ENCODE measurements at regions of chr10 and their contacts with region 1.

Region 1: DNA sequence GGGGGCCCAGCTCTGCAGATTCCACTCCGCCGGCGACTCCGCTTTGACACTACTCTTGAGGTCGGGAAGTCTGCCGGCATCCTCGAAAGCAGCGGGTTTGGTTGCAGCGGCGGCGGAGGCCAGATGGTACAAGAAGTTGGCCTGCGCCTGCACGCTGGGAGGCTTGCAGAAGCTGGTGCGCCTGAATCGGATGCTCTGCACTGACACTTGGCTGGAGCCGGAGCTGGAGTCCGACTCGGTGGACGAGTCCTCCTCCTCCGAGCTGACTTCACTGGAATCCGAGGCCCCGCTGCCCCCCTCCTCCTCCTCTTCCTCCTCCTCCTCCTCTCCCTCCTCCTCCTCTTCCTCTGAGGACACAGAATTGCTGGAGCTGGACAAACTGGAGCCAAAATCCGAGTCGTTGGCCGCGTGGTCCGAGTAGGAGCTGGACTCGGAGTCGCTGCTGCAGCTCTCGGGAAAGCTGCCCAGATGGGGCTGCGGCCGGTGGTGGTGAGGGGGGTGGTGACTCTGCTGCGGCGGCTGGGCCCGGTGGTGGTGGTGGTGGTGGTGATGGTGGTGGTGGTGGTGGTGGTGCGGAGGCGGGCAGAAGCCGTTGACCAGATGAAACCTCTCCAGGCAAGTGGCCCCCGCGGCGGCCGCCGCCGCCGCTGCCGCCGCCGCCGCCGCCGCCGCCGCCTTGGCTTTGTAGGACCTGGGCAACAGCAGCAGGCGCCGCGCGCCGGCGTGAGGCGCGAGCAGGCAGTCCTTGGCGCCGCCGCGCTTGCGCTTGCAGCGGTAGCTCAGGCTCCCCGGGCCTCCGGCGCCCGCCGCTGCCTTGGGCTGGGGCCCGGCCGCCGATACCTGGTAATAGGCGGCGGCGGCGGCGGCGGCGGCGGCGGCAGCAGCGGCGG is 9.0 kb downstream of the SKIDA1 start:
- DNase-seq: peak; percentile 64 to 78 (median 76)
- H3K4me3 ChIP-seq: peak overlapping the region; percentile 48
- H3K27ac ChIP-seq: peak overlapping the region; percentile 81 to 90
- H3K4me1 ChIP-seq: peaks cover 6% of the 10 kb centered on the region
- H3K27me3 ChIP-seq: no peaks in the 10 kb centered on the region
- CTCF ChIP-seq: no peak
- EP300 ChIP-seq: no peak
- POLR2A ChIP-seq: no peak

Region 2: GRCh38 chr10:21533467-21534279 is 17.2 kb after region 1 on chr10 and contains the start of gene MLLT10:
- intact Hi-C with region 1: loop called in 1 of 4 experiments (anchors 2 kb)
- DNase-seq: peak; percentile 94 to 98 (median 96)
- H3K4me3 ChIP-seq: peak within 1 kb of the TSS; percentile 70
- H3K27ac ChIP-seq: peak within 1 kb of the TSS; percentile 89 to 90
- H3K4me1 ChIP-seq: peaks cover 3% of the 10 kb centered on the region
- H3K27me3 ChIP-seq: no peaks in the 10 kb centered on the region
- CTCF ChIP-seq: peak in 2 of 3 donors; percentile 50 to 60
- EP300 ChIP-seq: no peak
- POLR2A ChIP-seq: peak; percentile 87
- total RNA-seq, gene MLLT10: 32.3 to 55.1 (median 43.7) TPM

Region 3: DNA sequence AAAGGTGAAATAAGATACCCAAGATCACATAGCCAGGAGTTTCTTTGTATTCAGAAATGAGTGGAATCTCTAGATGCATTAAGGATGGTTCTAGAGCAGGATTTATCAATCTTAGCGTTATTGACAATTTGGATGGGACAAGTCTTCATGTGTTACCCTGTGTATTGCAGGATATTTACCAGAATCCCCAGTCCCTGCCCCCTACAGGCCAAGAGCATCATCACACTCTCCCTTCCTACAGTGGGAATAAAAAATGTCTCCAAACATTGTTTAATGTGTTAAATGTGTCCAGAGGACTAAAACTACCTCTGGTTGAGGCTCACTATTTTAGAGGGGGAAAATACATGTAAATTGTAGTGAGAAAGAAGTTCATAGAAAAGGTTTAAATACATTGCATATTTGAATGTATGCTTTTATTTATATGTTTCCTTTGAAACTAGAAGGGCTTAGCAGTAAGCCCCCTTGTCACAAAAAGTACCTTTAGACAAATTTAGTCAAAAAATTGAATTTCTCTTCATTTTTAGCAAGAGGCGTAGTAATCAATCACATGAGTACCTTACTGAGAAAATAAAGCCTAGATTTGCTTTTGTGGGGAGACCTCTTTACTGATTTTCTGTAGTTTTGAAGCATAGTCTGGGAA is 158.8 kb after region 1 on chr10:
- intact Hi-C with region 1: no loop called
- DNase-seq: no peak
- H3K4me3 ChIP-seq: no peak overlapping the region
- H3K27ac ChIP-seq: no peak overlapping the region
- H3K4me1 ChIP-seq: no peaks in the 10 kb centered on the region
- H3K27me3 ChIP-seq: no peaks in the 10 kb centered on the region
- CTCF ChIP-seq: no peak
- EP300 ChIP-seq: no peak
- POLR2A ChIP-seq: no peak

Region 4: DNA sequence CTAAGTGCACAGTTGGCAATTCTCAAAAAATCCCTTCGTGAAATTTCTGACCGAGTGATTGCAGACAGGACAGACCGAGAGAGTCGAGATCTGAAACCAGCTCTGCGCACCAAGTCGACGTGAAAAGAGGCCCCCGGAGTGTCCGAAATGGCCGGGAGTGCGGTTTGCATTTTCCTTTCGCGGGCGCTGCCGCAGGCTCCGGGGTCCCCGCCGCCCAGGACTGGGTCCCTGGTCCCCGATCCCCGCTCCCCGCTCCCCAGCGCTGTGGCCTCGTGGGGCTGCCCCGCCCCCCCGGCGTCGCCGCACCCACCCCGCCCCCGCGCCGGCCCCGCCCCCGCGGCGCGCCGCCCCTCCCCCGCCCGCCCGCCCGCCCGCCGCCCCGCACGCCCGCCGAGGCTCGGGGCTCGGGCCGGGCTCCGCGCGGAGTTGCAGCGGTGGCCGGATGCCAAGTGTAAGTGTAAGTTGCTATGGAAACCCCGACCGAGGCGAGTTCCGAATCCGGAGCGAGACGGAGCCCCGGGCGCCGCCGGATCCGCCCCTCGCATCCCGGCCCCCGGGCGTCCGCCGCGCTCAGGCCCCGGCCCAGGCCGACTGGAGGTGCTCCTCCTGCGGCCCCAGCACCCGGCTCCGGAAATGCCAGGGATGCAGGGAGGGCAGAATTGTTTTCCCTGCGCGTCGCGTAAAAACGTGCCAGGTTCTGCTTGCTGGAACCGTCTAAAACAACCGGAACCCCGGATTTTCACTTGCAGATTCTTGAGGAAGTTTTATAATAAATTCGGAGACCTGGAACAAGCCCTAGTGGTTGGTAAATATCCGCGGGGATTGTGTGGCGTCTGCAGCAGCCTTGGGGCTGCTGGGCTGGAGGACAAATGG is 809.0 kb after region 1 on chr10:
- intact Hi-C with region 1: loop called in 1 of 4 experiments (anchors 10 kb)
- DNase-seq: peak; percentile 78 to 88 (median 86)
- H3K4me3 ChIP-seq: peak overlapping the region; percentile 55
- H3K27ac ChIP-seq: peak overlapping the region; percentile 22 to 33
- H3K4me1 ChIP-seq: peaks cover 3% of the 10 kb centered on the region
- H3K27me3 ChIP-seq: no peaks in the 10 kb centered on the region
- CTCF ChIP-seq: no peak
- EP300 ChIP-seq: no peak
- POLR2A ChIP-seq: no peak

Measured in ovary (tissue), 10 donors.